GM12878 (cell line): ENCODE measurements at regions of chr11 and their contacts with region 1.

Region 1: DNA sequence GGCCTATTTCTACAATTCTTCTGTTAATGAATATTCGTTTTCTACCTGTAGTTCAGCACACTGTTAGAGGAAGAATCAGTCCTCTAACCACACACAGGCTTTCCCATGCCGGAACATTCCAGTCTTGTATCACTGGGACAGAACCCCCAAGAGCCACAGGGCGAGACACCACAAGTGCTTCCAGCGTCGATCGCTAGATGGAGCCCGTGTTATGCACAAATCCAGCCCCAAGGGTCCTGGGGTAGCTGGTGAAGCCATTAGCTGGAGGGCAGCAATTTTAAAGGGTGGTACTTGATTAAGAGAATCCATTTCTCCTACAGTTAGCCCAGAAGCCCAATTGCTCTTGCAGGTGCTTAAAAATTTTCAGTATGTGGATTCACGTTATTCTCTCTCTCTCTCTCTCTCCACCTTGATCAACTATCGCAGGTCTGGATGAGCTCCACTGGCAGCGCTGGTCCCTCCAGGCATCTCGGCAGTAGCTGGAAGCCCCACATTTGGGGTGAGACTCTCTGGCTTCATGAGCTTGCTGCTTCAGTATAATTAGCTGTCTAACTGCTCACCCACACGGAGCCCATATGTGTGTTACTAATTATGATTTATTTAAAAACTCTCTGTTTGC is 148.2 kb upstream of the SNX19 start:
- DNase-seq: peak; percentile 5
- ATAC-seq: peak; percentile 94
- H3K4me3 ChIP-seq: no peak overlapping the region
- H3K27ac ChIP-seq: no peak overlapping the region
- H3K4me1 ChIP-seq: no peaks in the 10 kb centered on the region
- H3K27me3 ChIP-seq: peaks cover 0 to 6% of the 10 kb centered on the region in 2 experiments; a peak in 1 of 4 replicates
- CTCF ChIP-seq: peak; percentile 86 to 88 (median 87)
- EP300 ChIP-seq: no peak
- POLR2A ChIP-seq: no peak
- RAD21 ChIP-seq: peak; percentile 93

Region 2: GRCh38 chr11:130069684-130070108 is 994.8 kb before region 1 on chr11 and contains the start of gene APLP2:
- CTCF ChIA-PET with region 1: no interaction called
- POLR2A ChIA-PET with region 1: no interaction called
- RAD21 ChIA-PET with region 1: no interaction called
- SMC1A ChIA-PET with region 1: no interaction called
- in situ Hi-C with region 1: no loop called
- intact Hi-C with region 1: no loop called
- DNase-seq: peak; percentile 75
- ATAC-seq: peak; percentile 93
- H3K4me3 ChIP-seq: peak within 1 kb of the TSS; percentile 76
- H3K27ac ChIP-seq: no peak within 1 kb of the TSS
- H3K4me1 ChIP-seq: no peaks in the 10 kb centered on the region
- H3K27me3 ChIP-seq: peaks cover 0 to 4% of the 10 kb centered on the region in 2 experiments; a peak in 1 of 4 replicates
- CTCF ChIP-seq: no peak
- EP300 ChIP-seq: no peak
- POLR2A ChIP-seq: peak; percentile 97
- RAD21 ChIP-seq: no peak
- polyA plus RNA-seq, gene APLP2: 2.3 to 4.6 TPM

Region 3: GRCh38 chr11:131121426-131122333 is 57.2 kb after region 1 on chr11:
- CTCF ChIA-PET with region 1: no interaction called
- POLR2A ChIA-PET with region 1: no interaction called
- RAD21 ChIA-PET with region 1: no interaction called
- SMC1A ChIA-PET with region 1: no interaction called
- in situ Hi-C with region 1: no loop called
- intact Hi-C with region 1: no loop called
- DNase-seq: no peak
- ATAC-seq: no peak
- H3K4me3 ChIP-seq: no peak overlapping the region
- H3K27ac ChIP-seq: no peak overlapping the region
- H3K4me1 ChIP-seq: no peaks in the 10 kb centered on the region
- H3K27me3 ChIP-seq: no peaks in the 10 kb centered on the region
- CTCF ChIP-seq: no peak
- EP300 ChIP-seq: no peak
- POLR2A ChIP-seq: no peak
- RAD21 ChIP-seq: no peak

Region 4: DNA sequence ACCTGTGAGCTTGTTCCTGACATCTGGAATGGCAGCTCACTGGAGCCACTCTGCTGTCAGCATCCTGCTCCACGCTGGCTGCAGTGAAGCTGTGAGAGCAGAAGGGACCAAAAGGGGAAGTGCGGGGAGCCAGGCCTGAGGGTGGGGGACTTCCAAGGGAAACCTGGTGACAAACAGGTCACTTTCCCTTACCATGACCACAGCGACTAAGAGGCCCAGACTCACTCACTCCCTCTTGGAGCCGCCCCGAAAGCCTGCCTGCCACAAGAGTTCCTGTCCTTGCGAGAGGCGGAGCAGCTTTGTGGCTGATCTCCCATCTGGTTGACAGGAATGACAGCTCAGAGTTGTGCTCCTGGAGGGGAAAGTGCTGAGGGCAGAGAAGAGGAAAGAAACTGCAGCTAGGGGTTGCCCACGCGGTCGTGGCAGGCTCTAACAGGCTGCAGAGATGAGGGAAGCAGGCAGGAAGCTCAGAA is 122.2 kb after region 1 on chr11:
- CTCF ChIA-PET with region 1: interaction called, 11 read pairs
- POLR2A ChIA-PET with region 1: no interaction called
- RAD21 ChIA-PET with region 1: interaction called, 3 read pairs
- SMC1A ChIA-PET with region 1: interaction called, 14 read pairs
- in situ Hi-C with region 1: no loop called
- intact Hi-C with region 1: no loop called
- DNase-seq: peak; percentile 72
- ATAC-seq: peak; percentile 96
- H3K4me3 ChIP-seq: peak overlapping the region; percentile 22
- H3K27ac ChIP-seq: no peak overlapping the region
- H3K4me1 ChIP-seq: peaks cover 8% of the 10 kb centered on the region
- H3K27me3 ChIP-seq: 0 out of 4 replicates have a peak, but pooled peaks cover 0 to 2% of the 10 kb centered on the region in 2 experiments
- CTCF ChIP-seq: no peak
- EP300 ChIP-seq: peak; percentile 30 to 72; a peak in 3 of 4 replicates
- POLR2A ChIP-seq: peak; percentile 57; the same call in 1 of the 2 replicates
- RAD21 ChIP-seq: no peak

Region 5: GRCh38 chr11:131217313-131218310 is 153.1 kb after region 1 on chr11:
- CTCF ChIA-PET with region 1: interaction called, 68 read pairs
- POLR2A ChIA-PET with region 1: no interaction called
- RAD21 ChIA-PET with region 1: interaction called, 41 read pairs
- SMC1A ChIA-PET with region 1: interaction called, 47 read pairs
- in situ Hi-C with region 1: no loop called
- intact Hi-C with region 1: loop called (anchors 1 kb)
- DNase-seq: no peak
- ATAC-seq: peak; percentile 73
- H3K4me3 ChIP-seq: no peak overlapping the region
- H3K27ac ChIP-seq: no peak overlapping the region
- H3K4me1 ChIP-seq: no peaks in the 10 kb centered on the region
- H3K27me3 ChIP-seq: peaks cover 0 to 1% of the 10 kb centered on the region in 2 experiments; a peak in 2 of 4 replicates
- CTCF ChIP-seq: peak; percentile 40 to 58 (median 43); a peak in 5 of 6 replicates
- EP300 ChIP-seq: no peak
- POLR2A ChIP-seq: no peak
- RAD21 ChIP-seq: peak; percentile 74

Region 6: GRCh38 chr11:131392528-131393255 is 328.2 kb after region 1 on chr11:
- CTCF ChIA-PET with region 1: interaction called, 5 read pairs
- POLR2A ChIA-PET with region 1: no interaction called
- RAD21 ChIA-PET with region 1: no interaction called
- SMC1A ChIA-PET with region 1: no interaction called
- in situ Hi-C with region 1: no loop called
- intact Hi-C with region 1: loop called (anchors 5 kb)
- DNase-seq: no peak
- ATAC-seq: peak; percentile 50; the same call in 1 of the 3 replicates
- H3K4me3 ChIP-seq: no peak overlapping the region
- H3K27ac ChIP-seq: no peak overlapping the region
- H3K4me1 ChIP-seq: no peaks in the 10 kb centered on the region
- H3K27me3 ChIP-seq: 0 out of 4 replicates have a peak, but pooled peaks cover 0 to 1% of the 10 kb centered on the region in 2 experiments
- CTCF ChIP-seq: peak in 2 of 3 experiments; percentile 2 to 25; a peak in 2 of 6 replicates
- EP300 ChIP-seq: no peak
- POLR2A ChIP-seq: no peak
- RAD21 ChIP-seq: 0 out of 2 replicates have a peak, but pooled peaks have one; percentile 8

Region 7: DNA sequence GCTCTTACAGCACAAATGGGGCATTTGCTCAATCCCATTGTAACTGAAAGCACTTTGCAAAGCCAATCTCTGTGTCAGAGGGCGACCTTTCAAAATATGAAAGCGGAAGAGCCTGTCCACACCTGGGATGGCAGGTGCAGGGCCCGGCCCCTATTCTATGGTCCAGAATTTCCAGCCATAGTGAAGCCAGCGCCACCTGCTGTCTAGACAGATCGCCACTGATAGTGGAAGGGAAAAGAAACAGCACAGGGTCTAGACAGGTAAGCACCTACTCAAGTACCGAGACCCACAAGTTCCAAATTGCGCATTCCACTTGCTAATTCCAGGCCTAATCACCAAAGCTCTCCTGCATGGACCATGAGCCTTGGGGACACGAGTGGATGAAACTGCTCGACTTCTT is 447.3 kb after region 1 on chr11:
- CTCF ChIA-PET with region 1: interaction called, 36 read pairs
- POLR2A ChIA-PET with region 1: no interaction called
- RAD21 ChIA-PET with region 1: interaction called, 3 read pairs
- SMC1A ChIA-PET with region 1: interaction called, 8 read pairs
- in situ Hi-C with region 1: loop called (anchors 5 kb)
- intact Hi-C with region 1: loop called (anchors 1 kb)
- DNase-seq: no peak
- ATAC-seq: peak; percentile 80
- H3K4me3 ChIP-seq: no peak overlapping the region
- H3K27ac ChIP-seq: no peak overlapping the region
- H3K4me1 ChIP-seq: no peaks in the 10 kb centered on the region
- H3K27me3 ChIP-seq: no peaks in the 10 kb centered on the region
- CTCF ChIP-seq: peak; percentile 57 to 64 (median 60)
- EP300 ChIP-seq: no peak
- POLR2A ChIP-seq: no peak
- RAD21 ChIP-seq: peak; percentile 56